ENCODE measurements at regions of chr1 and their contacts with region 1.

Region 1: GRCh38 chr1:95084317-95085176 is 11.8 kb upstream of the ALG14 start:
- DNase-seq: peak in 2 of 4 donors; percentile 17 to 43
- ATAC-seq: peak; percentile 26
- H3K4me3 ChIP-seq: no peak overlapping the region
- H3K27ac ChIP-seq: no peak overlapping the region
- H3K4me1 ChIP-seq: peaks cover 3% of the 10 kb centered on the region
- H3K27me3 ChIP-seq: no peaks in the 10 kb centered on the region
- CTCF ChIP-seq: peak in 6 of 7 experiments; percentile 31 to 66 (median 51)
- POLR2A ChIP-seq: no peak

Region 2: GRCh38 chr1:95223110-95223509 is 138.6 kb after region 1 on chr1:
- intact Hi-C with region 1: loop called (anchors 10 kb)
- DNase-seq: no peak
- ATAC-seq: no peak
- H3K4me3 ChIP-seq: no peak overlapping the region
- H3K27ac ChIP-seq: no peak overlapping the region
- H3K4me1 ChIP-seq: peaks cover 13% of the 10 kb centered on the region
- H3K27me3 ChIP-seq: no peaks in the 10 kb centered on the region
- CTCF ChIP-seq: no peak
- POLR2A ChIP-seq: no peak